ENCODE measurements at regions of chr10 and their contacts with region 1.

Region 1: GRCh38 chr10:26386781-26387180 is 51.4 kb upstream of the APBB1IP start:
- DNase-seq: no peak
- ATAC-seq: peak; percentile 58; the same call in 2 of the 3 replicates
- H3K4me3 ChIP-seq: no peak overlapping the region
- H3K27ac ChIP-seq: no peak overlapping the region
- H3K4me1 ChIP-seq: peaks cover 19% of the 10 kb centered on the region
- H3K27me3 ChIP-seq: no peaks in the 10 kb centered on the region
- CTCF ChIP-seq: no peak
- EP300 ChIP-seq: no peak
- POLR2A ChIP-seq: no peak
- RAD21 ChIP-seq: no peak

Region 2: GRCh38 chr10:26341701-26342100 is 45.1 kb before region 1 on chr10:
- CTCF ChIA-PET with region 1: no interaction called
- POLR2A ChIA-PET with region 1: no interaction called
- RAD21 ChIA-PET with region 1: no interaction called
- SMC1A ChIA-PET with region 1: no interaction called
- in situ Hi-C with region 1: no loop called
- intact Hi-C with region 1: no loop called
- DNase-seq: no peak
- ATAC-seq: no peak
- H3K4me3 ChIP-seq: no peak overlapping the region
- H3K27ac ChIP-seq: no peak overlapping the region
- H3K4me1 ChIP-seq: no peaks in the 10 kb centered on the region
- H3K27me3 ChIP-seq: no peaks in the 10 kb centered on the region
- CTCF ChIP-seq: no peak
- EP300 ChIP-seq: no peak
- POLR2A ChIP-seq: no peak
- RAD21 ChIP-seq: no peak

Region 3: GRCh38 chr10:26372513-26373354 is 14.0 kb before region 1 on chr10:
- CTCF ChIA-PET with region 1: interaction called, 10 read pairs
- POLR2A ChIA-PET with region 1: interaction called, 3 read pairs
- RAD21 ChIA-PET with region 1: interaction called, 3 read pairs
- SMC1A ChIA-PET with region 1: interaction called, 3 read pairs
- in situ Hi-C with region 1: no loop called
- intact Hi-C with region 1: no loop called
- DNase-seq: peak; percentile 79
- ATAC-seq: peak; percentile 78
- H3K4me3 ChIP-seq: peak overlapping the region; percentile 53
- H3K27ac ChIP-seq: peak overlapping the region; percentile 93
- H3K4me1 ChIP-seq: peaks cover 24% of the 10 kb centered on the region
- H3K27me3 ChIP-seq: no peaks in the 10 kb centered on the region
- CTCF ChIP-seq: no peak
- EP300 ChIP-seq: peak; percentile 68 to 86; a peak in 3 of 4 replicates
- POLR2A ChIP-seq: no peak
- RAD21 ChIP-seq: no peak; the same call in 1 of the 2 replicates

Measured in GM12878 (cell line).